ENCODE measurements at regions of chr10 and their contacts with region 1.

Region 1: GRCh38 chr10:133276435-133277201 is at the start of gene ADAM8:
- DNase-seq: peak; percentile 66
- H3K4me3 Mint-ChIP-seq: peak within 1 kb of the TSS; percentile 91
- H3K27ac Mint-ChIP-seq: peak within 1 kb of the TSS; percentile 84
- H3K4me1 Mint-ChIP-seq: peaks cover 18% of the 10 kb centered on the region
- H3K27me3 Mint-ChIP-seq: no peaks in the 10 kb centered on the region
- total RNA-seq, gene ADAM8: 214 and 220 TPM in 2 replicates

Region 2: DNA sequence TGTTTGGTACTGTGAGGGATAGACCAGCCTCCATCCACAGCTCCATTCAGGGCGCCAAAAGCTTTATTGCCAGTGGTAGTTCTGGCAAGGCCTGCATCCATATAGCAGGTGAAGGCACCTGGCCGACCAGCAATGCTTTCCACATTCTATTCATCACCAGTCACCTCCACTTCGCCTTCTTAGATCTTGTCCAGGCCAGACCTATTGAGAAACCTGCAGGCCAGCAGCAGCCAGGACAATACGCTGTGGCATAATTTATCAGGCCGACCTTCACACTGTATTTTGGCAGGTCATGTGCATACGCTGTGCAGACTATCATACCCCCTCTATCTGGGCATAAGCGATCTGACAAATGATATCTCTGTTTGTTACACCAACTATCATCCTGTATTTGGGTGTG is 131.8 kb before region 1 on chr10:
- intact Hi-C with region 1: loop called (anchors 1 kb)
- DNase-seq: no peak
- H3K4me3 Mint-ChIP-seq: no peak overlapping the region
- H3K27ac Mint-ChIP-seq: no peak overlapping the region
- H3K4me1 Mint-ChIP-seq: peaks cover 7% of the 10 kb centered on the region
- H3K27me3 Mint-ChIP-seq: peaks cover 23% of the 10 kb centered on the region

Region 3: GRCh38 chr10:133196221-133196915 is 80.2 kb before region 1 on chr10:
- intact Hi-C with region 1: no loop called
- DNase-seq: no peak
- H3K4me3 Mint-ChIP-seq: no peak overlapping the region
- H3K27ac Mint-ChIP-seq: no peak overlapping the region
- H3K4me1 Mint-ChIP-seq: no peaks in the 10 kb centered on the region
- H3K27me3 Mint-ChIP-seq: peaks cover 10% of the 10 kb centered on the region

Region 4: DNA sequence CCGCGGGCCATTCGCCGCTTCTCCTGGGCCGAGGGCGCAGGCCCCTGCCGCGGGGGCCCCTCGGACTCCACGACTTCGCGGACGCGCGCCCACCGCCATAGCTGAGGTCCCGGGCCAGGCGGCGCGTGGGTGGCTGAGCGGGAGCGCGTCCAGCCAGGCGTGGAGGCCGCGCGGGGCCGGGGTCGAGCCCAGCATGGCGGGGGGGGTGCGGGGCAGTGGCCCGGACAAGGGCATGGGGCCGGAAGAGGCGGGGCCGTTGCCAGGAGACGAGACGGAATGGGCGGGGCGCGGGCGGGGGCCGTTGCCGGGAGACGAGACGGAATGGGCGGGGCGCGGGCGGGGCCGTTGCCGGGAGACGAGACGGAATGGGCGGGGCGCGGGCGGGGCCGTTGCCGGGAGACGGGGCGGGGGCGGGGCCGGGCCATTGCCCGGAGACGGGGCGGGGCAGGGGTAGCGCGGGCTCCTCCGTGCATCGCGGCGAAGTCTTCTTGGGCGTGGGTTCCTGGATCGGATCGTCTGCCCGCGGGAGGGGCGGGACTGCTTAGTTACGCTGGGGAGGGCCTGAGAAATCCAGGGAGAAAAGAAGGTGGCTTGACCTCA is 14.8 kb before region 1 on chr10:
- intact Hi-C with region 1: loop called (anchors 1 kb)
- DNase-seq: peak; percentile 79
- H3K4me3 Mint-ChIP-seq: peak overlapping the region; percentile 79
- H3K27ac Mint-ChIP-seq: no peak overlapping the region
- H3K4me1 Mint-ChIP-seq: peaks cover 53% of the 10 kb centered on the region
- H3K27me3 Mint-ChIP-seq: no peaks in the 10 kb centered on the region

Measured in activated T-helper 2 cell treated with anti-CD3 and anti-CD28 coated beads, Interferon-gamma antibody, Interleukin-2, Interleukin-4, amounts not matched to agents 10 μg/mL and 5 μg/mL and 100 μg/mL, durations not matched to agents 14 hours and 24 hours and 36 hours (primary cell).